ENCODE measurements at regions of chr13 and their contacts with region 1.

Region 1: DNA sequence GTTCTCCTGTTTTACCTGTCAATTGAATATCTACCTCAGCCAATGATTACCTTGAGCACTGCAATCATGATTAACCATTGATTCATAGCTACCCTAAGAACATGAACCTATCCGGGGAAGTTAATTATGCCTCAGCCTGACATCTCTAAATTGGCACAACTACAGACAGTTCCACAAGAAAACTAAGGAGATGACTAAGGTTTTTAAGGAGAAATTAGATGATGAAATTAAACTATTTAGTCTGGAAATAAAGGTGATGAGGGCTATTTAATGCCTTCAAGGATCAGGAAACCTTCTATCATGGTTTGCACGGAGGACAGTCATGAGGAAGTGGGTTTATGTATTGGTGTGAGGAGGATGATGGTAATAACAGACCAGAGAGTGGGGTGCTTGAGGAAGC is 203.4 kb downstream of the COL4A1 start:
- DNase-seq: peak; percentile 81
- H3K4me3 ChIP-seq: no peak overlapping the region
- H3K27ac ChIP-seq: peak overlapping the region; percentile 52
- H3K4me1 ChIP-seq: peaks cover 13% of the 10 kb centered on the region
- H3K27me3 ChIP-seq: no peaks in the 10 kb centered on the region
- CTCF ChIP-seq: no peak

Region 2: DNA sequence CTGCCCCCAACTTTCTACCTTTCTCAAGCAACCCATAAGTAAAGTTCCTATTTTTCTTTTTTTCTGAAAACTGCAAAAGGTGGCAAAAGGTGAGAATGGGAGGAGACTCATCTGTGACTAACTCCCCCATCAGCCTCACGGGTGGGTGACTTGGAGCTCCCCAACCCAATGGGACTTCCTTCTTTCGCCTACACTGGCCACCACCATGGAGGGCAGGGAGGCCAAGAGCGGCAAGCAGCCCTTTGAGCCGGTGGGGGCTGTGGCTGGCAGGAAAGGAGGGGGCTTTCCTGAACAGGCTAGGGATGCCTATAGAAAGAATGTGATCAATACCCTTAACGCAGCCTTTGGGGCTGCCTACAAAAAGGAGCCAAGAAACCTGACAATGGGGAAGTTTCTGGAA is 333.6 kb before region 1 on chr13:
- CTCF ChIA-PET with region 1: no interaction called
- dilution Hi-C with region 1: no loop called
- in situ Hi-C with region 1: no loop called
- intact Hi-C with region 1: no loop called
- DNase-seq: no peak
- H3K4me3 ChIP-seq: no peak overlapping the region
- H3K27ac ChIP-seq: no peak overlapping the region
- H3K4me1 ChIP-seq: peaks cover 12% of the 10 kb centered on the region
- H3K27me3 ChIP-seq: no peaks in the 10 kb centered on the region
- CTCF ChIP-seq: no peak

Region 3: DNA sequence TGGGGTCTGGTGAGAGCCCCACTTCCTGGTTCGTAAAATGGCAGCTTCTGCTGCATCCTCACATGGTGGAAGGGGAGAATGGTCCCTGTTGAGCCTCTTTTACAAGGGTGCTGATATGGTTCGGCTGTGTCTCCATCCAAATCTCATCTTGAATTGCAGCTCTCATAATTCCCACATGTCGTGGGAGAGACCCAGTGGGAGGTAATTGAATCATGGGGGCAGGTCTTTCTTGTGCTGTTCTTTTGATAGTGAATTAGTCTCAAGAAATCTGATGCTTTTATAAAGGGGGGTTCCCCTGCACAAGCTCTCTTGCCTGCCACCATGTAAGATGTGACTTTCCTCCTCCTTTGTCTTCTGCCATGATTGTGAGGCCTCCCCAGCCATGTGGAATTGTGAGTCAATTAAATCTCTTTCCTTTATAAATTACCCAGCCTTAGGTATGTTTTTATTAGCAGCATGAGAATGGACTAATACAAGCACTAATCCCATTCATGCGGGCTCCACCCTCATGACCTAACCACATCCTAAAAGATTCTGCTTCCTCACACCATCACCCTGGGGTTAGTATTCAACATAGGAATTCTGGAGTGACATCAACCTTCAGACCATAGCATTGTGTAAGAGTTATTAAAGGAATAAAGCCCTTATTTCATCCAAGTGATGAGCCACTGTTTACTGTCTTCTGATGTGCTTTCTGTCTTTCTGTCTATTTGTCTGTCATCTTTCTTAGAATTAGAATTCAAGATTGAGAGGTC is 158.2 kb before region 1 on chr13:
- CTCF ChIA-PET with region 1: no interaction called
- dilution Hi-C with region 1: loop called (anchors 5 kb)
- in situ Hi-C with region 1: no loop called
- intact Hi-C with region 1: loop called (anchors 2 kb)
- DNase-seq: peak; percentile 96
- H3K4me3 ChIP-seq: no peak overlapping the region
- H3K27ac ChIP-seq: peak overlapping the region; percentile 74
- H3K4me1 ChIP-seq: peaks cover 11% of the 10 kb centered on the region
- H3K27me3 ChIP-seq: no peaks in the 10 kb centered on the region
- CTCF ChIP-seq: no peak

Region 4: GRCh38 chr13:110138010-110138699 is 34.6 kb after region 1 on chr13:
- CTCF ChIA-PET with region 1: no interaction called
- dilution Hi-C with region 1: no loop called
- in situ Hi-C with region 1: no loop called
- intact Hi-C with region 1: no loop called
- DNase-seq: peak; percentile 82
- H3K4me3 ChIP-seq: peak overlapping the region; percentile 37 to 68 (median 52)
- H3K27ac ChIP-seq: peak overlapping the region; percentile 48
- H3K4me1 ChIP-seq: peaks cover 19% of the 10 kb centered on the region
- H3K27me3 ChIP-seq: no peaks in the 10 kb centered on the region
- CTCF ChIP-seq: peak; percentile 9 to 25

Region 5: GRCh38 chr13:110283736-110284517 is 180.4 kb after region 1 on chr13:
- CTCF ChIA-PET with region 1: no interaction called
- dilution Hi-C with region 1: no loop called
- in situ Hi-C with region 1: no loop called
- intact Hi-C with region 1: no loop called
- DNase-seq: no peak
- H3K4me3 ChIP-seq: no peak overlapping the region
- H3K27ac ChIP-seq: no peak overlapping the region
- H3K4me1 ChIP-seq: peaks cover 19% of the 10 kb centered on the region
- H3K27me3 ChIP-seq: no peaks in the 10 kb centered on the region
- CTCF ChIP-seq: no peak

Measured in mammary epithelial cell (primary cell).